HAP-1 (cell line): ENCODE measurements at regions of chr20 and their contacts with region 1.

Region 1: DNA sequence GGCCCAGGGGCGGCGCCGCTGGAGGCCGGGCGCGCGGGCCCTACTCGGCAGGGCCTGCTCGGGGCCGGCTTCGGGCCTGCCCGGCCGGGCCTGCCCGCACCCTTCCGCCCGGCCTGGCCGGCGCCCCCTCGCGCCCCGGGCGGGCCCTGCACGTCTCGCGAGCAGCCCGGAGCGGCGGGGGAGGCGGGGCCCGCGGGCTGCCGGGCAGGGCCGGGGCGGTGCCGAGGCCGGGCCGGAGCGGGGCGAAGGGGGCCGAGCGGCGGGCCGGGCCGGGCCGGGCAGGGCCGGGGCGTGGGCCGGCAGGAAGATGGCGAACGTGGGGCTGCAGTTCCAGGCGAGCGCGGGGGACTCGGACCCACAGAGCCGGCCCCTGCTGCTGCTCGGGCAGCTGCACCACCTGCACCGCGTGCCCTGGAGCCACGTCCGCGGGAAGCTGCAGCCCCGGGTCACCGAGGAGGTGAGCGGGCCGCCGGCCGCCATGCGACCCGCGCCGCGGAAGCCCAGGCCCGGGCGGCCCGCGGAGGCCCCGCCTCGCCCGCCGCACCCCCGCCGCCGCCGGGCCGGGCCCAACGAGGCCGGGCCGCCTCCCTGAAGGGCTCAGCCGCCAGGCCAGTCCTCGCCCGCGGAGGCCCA is at the start of gene NPEPL1:
- DNase-seq: peak; percentile 69 to 77
- H3K4me3 ChIP-seq: peak within 1 kb of the TSS; percentile 23
- H3K4me1 ChIP-seq: peaks cover 22% of the 10 kb centered on the region
- H3K27me3 ChIP-seq: no peaks in the 10 kb centered on the region

Region 2: GRCh38 chr20:58236612-58237330 is 455.9 kb before region 1 on chr20:
- in situ Hi-C with region 1: loop called (anchors 25 kb)
- DNase-seq: peak; percentile 65 to 88
- H3K4me3 ChIP-seq: peak overlapping the region; percentile 25
- H3K4me1 ChIP-seq: no peaks in the 10 kb centered on the region
- H3K27me3 ChIP-seq: peaks cover 13% of the 10 kb centered on the region

Region 3: GRCh38 chr20:58558486-58559367 is 134.0 kb before region 1 on chr20:
- in situ Hi-C with region 1: no loop called
- DNase-seq: no peak
- H3K4me3 ChIP-seq: no peak overlapping the region
- H3K4me1 ChIP-seq: no peaks in the 10 kb centered on the region
- H3K27me3 ChIP-seq: no peaks in the 10 kb centered on the region